Activated CD4-positive, alpha-beta memory T cell treated with anti-CD3 and anti-CD28 coated beads, Interleukin-2, amount 10 ng/mL, durations not matched to agents 7 days and 5 days (primary cell): ENCODE measurements at regions of chr20 and their contacts with region 1.

Region 1: GRCh38 chr20:48657475-48658470 is 170.0 kb downstream of the PREX1 start:
- DNase-seq: peak; percentile 74
- H3K4me3 Mint-ChIP-seq: no peak overlapping the region
- H3K27ac Mint-ChIP-seq: peak overlapping the region; percentile 27
- H3K4me1 Mint-ChIP-seq: peaks cover 11% of the 10 kb centered on the region
- H3K27me3 Mint-ChIP-seq: no peaks in the 10 kb centered on the region

Region 2: DNA sequence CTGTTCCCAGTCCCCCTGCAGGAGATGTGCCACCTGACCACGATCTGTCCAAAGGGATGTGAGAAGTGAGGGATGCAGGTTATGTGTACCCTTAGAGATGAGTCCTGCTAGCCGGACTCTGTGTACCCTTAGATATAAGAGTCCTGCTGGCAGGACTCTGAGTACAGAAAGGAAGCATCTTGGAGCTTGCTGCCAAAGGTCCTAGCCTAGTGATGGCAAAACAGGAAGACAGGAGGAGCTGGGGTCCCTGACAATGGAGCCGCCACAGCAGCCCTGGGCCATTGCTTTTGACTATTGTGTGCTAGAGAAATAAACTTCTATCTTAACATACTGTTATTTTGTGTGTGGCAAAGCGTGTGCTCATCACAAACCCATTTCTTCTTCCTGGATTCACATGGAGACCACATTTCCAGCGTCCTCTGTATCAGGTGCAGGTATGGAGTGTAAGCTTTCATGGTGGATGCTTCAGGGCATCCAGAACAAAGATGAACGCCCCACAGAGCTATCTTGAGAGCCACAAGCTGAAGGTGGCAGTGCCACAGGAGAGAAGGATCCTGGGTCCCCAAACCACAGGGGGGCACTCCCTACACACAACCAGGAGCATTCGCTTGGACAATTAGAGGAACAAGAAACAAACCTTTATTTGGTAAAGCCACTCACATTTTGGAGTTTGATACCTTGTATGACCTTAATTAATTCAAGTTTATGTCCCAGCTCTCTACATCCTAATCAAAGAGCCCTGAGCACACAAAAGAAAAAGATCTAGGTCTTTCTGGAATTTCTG is 236.4 kb before region 1 on chr20:
- CTCF ChIA-PET with region 1: no interaction called
- POLR2A ChIA-PET with region 1: no interaction called
- DNase-seq: no peak
- H3K4me3 Mint-ChIP-seq: no peak overlapping the region
- H3K27ac Mint-ChIP-seq: no peak overlapping the region
- H3K4me1 Mint-ChIP-seq: no peaks in the 10 kb centered on the region
- H3K27me3 Mint-ChIP-seq: peaks cover 7% of the 10 kb centered on the region

Region 3: DNA sequence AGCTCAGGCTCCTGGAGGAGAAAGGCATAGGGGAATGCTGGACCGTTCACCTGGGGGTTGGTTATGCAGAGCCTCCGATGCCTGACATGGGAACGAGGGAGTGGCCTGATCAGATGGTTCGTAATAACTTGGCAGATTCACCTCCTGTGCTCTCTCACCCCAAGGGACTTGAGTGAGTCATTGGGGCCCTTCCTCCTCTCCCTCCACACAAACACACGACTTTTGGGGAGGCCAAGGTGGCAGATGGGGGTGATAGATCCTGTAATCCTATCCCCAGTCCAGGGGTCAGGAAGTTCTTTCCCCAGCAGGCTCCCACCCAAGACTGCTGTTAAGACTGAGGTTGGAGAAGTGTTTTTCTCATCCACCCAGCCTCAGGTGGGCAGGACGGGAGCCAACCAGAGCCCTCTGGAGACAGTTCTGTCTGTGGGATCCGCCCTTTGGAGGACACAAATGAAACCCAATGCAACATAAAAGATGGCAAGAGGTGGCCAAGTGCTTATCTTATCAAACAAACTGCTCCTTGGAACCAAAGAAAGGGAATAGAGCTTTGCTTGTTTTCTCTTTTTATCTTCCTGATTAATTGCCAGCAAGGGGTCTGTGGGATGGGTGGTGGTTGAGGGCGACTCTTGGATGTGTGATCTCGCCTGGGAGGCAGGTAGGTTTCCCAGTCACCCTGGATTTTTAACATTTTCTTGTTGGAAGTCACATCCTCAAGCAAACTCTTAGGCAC is 218.3 kb after region 1 on chr20:
- CTCF ChIA-PET with region 1: interaction called, 62 read pairs
- POLR2A ChIA-PET with region 1: interaction called, 3 read pairs
- DNase-seq: no peak
- H3K4me3 Mint-ChIP-seq: no peak overlapping the region
- H3K27ac Mint-ChIP-seq: no peak overlapping the region
- H3K4me1 Mint-ChIP-seq: peaks cover 24% of the 10 kb centered on the region
- H3K27me3 Mint-ChIP-seq: no peaks in the 10 kb centered on the region

Region 4: DNA sequence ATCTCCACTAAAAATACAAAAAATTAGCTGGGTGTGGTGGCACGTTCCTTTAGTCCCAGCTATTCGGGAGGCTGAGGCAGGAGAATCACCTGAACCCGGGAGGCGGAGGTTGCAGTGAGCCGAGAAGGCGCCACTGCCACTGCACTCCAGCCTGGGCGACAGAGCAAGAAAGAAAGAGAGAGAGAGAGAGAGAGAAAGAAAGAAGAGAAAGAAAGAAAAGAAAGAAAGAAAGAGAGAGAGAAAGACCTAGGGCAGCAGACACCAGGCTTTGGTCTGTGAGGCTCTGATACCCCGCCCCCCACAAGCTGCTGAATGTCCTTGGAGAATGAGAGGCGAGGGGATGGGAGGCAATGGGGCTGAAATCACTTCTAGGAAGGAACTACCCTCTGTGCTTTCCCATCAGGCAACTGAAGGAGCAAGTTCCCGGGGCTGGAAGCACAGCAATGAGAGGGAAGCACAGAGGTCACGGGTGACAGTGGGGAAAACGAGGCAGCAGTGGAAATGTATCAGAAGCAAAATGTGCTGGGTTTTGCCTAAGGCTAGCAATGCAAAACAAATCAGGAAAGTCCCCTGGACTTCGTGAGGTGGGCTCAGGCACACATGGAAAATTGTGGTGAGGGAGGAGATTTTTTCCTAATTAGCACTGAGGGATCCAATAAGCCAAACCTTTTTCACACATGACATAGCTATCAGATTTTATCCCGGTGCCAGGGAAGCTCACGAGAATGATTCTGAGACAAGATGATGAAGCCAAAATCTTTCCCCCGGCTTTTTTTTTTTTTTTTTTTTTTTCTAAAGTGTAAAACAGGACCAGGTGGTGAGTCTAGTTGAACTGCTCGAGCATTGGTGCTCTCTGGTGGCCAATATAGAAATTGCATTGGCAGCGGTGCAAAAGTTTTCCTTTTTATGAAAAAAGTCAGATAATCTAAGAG is 246.9 kb after region 1 on chr20:
- CTCF ChIA-PET with region 1: interaction called, 79 read pairs
- POLR2A ChIA-PET with region 1: interaction called, 3 read pairs
- DNase-seq: peak; percentile 75
- H3K4me3 Mint-ChIP-seq: no peak overlapping the region
- H3K27ac Mint-ChIP-seq: no peak overlapping the region
- H3K4me1 Mint-ChIP-seq: peaks cover 27% of the 10 kb centered on the region
- H3K27me3 Mint-ChIP-seq: peaks cover 4% of the 10 kb centered on the region